ENCODE measurements at regions of chr15 and their contacts with region 1.

Region 1: DNA sequence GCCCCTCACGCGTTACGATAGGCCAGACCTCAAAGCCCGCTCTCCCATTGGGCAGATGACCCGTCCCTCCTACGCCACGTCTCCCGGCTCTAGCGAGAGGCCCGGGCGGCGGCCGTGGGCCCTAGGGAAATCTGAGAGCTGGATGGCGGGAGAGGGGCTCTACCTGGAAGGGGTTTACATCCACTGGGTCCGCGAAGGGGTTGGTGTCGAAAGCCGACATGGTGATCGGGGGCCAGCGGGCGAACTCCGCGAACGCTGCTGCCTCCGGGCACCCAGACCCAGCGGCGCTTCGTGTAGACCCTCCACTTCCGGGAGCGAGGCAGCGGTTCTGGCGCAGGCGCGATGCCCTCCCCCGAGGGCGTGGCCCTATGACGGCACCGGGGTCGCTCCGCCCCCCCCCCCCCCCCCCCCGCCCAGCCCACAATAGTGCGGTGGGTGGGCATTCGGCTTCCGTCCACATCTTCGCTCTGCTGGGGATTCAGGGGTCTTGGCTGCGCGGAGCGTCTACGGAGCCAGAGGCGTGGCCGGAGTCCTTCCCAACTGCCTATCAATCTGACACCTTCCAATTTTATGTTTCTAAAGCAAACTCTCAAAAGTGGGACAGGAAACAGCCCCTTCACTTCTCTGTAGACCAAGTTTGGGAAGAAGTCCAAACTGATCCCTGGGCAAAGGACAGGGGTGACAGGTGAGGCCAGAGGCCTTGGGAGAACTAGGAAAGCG is at the start of gene SCAMP2:
- DNase-seq: peak; percentile 95
- ATAC-seq: peak; percentile 96
- H3K4me3 Mint-ChIP-seq: peak within 1 kb of the TSS; percentile 99
- H3K27ac Mint-ChIP-seq: peak within 1 kb of the TSS; percentile 94
- H3K4me1 Mint-ChIP-seq: peaks cover 44% of the 10 kb centered on the region
- H3K27me3 Mint-ChIP-seq: peaks cover 6% of the 10 kb centered on the region
- total RNA-seq, gene SCAMP2: 96.9 to 105 TPM

Region 2: DNA sequence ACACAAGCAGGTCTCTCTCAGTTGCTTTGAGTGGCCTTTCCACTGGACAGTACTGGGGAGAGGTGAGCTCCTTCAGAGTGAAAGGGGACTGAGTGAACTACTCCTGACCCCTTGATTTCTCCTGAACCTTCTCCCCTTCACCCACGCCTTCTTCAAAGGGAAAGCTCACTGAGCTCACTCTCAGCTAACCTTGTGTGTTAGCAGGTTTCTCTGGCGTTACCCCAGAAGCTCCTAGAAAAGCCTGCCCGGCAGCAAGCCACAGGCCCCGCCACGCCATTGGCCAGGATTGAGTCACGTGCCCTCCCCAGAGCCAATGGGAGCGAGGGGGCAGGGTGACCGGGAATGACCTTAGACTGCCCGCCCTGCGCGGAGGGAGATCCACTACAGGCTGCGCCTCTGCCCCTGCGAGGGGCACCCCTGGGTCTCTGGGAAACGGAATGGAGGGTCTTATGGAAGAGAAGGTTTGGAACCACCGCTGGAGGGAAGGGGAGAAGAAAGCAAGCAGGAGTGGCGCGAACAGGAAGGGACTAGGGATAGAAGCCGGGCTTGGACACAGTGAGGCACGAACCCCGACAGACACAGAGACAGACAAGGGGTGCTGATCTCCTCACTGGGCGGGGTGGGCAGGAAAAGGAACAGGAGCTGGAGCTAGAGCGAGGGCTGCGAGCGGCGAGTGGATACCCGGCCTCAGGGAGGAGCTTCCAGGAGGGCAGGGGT is 274.9 kb before region 1 on chr15:
- CTCF ChIA-PET with region 1: no interaction called
- POLR2A ChIA-PET with region 1: no interaction called
- DNase-seq: peak; percentile 92
- ATAC-seq: peak; percentile 99
- H3K4me3 Mint-ChIP-seq: peak overlapping the region; percentile 96
- H3K27ac Mint-ChIP-seq: peak overlapping the region; percentile 97
- H3K4me1 Mint-ChIP-seq: peaks cover 23% of the 10 kb centered on the region
- H3K27me3 Mint-ChIP-seq: no peaks in the 10 kb centered on the region

Region 3: GRCh38 chr15:74793135-74794028 is 79.8 kb before region 1 on chr15:
- CTCF ChIA-PET with region 1: interaction called, 11 read pairs
- POLR2A ChIA-PET with region 1: interaction called, 5 read pairs
- DNase-seq: peak; percentile 79
- ATAC-seq: peak; percentile 31
- H3K4me3 Mint-ChIP-seq: peak overlapping the region; percentile 19
- H3K27ac Mint-ChIP-seq: peak overlapping the region; percentile 82
- H3K4me1 Mint-ChIP-seq: peaks cover 89% of the 10 kb centered on the region
- H3K27me3 Mint-ChIP-seq: no peaks in the 10 kb centered on the region

Region 4: GRCh38 chr15:74842581-74843444 is 30.4 kb before region 1 on chr15 and contains the start of gene ULK3:
- CTCF ChIA-PET with region 1: interaction called, 26 read pairs
- POLR2A ChIA-PET with region 1: interaction called, 24 read pairs
- DNase-seq: peak; percentile 94
- ATAC-seq: peak; percentile 87
- H3K4me3 Mint-ChIP-seq: peak within 1 kb of the TSS; percentile 89
- H3K27ac Mint-ChIP-seq: peak within 1 kb of the TSS; percentile 93
- H3K4me1 Mint-ChIP-seq: peaks cover 49% of the 10 kb centered on the region
- H3K27me3 Mint-ChIP-seq: no peaks in the 10 kb centered on the region
- total RNA-seq, gene ULK3: 56.9 to 58.0 TPM

Region 5: DNA sequence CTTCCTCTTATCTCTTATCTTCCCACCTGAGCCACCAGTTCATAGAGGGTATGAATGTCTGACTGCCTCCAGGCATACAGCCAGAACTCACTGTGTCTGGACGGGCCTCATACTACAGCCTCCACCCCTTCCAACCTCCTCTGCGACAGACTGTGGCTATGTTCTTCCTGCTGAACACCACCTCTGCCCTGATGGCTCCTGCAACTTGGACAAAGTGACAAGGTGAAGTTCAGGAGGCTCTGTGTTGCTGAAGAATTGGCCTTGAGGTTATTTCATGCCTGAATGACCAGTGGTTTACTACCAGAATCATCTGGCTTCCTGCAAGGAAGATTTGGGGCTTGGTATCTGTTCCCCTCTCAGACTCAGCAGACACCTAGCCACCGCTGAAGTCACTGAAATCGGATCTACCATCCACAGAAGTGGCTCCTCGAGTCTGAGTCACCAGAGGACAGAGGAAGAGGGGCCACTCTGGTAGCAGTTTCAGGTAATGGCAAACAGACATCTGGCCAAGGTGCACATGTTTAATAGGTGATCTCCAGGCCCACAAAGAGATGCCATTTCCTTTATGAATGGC is 16.0 kb before region 1 on chr15:
- CTCF ChIA-PET with region 1: interaction called, 24 read pairs
- POLR2A ChIA-PET with region 1: interaction called, 33 read pairs
- DNase-seq: no peak
- ATAC-seq: peak; percentile 38
- H3K4me3 Mint-ChIP-seq: no peak overlapping the region
- H3K27ac Mint-ChIP-seq: peak overlapping the region; percentile 87
- H3K4me1 Mint-ChIP-seq: peaks cover 41% of the 10 kb centered on the region
- H3K27me3 Mint-ChIP-seq: no peaks in the 10 kb centered on the region

Region 6: DNA sequence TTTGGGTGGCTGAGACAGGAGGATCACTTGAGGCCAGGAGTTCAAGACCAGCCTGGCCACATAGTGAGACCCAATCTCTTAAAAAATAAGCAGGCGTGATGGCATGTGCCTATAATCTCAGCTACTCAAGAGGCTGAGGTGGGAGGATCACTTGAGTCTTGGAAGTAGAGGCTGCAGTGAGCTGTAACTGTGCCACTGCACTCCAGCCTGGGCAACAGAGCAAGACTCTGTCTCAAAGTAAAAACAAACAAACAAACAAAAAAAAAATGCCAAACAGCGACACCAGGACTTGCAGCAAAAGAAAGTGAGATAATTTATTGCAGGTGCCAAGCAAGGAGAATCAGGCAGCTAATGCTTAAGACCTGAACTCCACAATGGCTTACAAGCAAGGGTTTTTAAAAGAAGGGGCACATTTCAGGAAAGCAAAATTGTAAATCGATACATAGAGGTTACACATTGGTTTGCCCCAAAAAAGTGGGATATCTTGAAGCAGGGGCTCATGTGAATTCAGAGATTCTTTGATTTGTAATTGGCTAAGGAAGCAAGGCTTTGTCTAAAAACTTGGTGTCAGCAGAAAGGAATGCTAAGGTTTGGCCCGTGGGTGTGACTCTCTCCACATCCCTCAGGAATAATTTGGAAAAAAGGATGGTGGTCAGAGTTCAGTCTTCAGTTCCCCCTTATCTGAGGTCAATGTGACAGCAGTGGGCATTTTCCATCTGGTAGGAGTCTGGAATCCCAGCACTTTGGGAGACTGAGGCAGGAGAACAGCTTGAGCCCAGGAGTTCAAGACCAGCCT is 11.4 kb after region 1 on chr15:
- CTCF ChIA-PET with region 1: interaction called, 11 read pairs
- POLR2A ChIA-PET with region 1: interaction called, 11 read pairs
- DNase-seq: no peak
- ATAC-seq: no peak
- H3K4me3 Mint-ChIP-seq: no peak overlapping the region
- H3K27ac Mint-ChIP-seq: peak overlapping the region; percentile 30
- H3K4me1 Mint-ChIP-seq: peaks cover 27% of the 10 kb centered on the region
- H3K27me3 Mint-ChIP-seq: peaks cover 4% of the 10 kb centered on the region

Region 7: GRCh38 chr15:74889883-74890664 is 16.9 kb after region 1 on chr15 and contains the start of gene MPI:
- CTCF ChIA-PET with region 1: interaction called, 5 read pairs
- POLR2A ChIA-PET with region 1: interaction called, 11 read pairs
- DNase-seq: peak; percentile 90
- ATAC-seq: peak; percentile 97
- H3K4me3 Mint-ChIP-seq: peak within 1 kb of the TSS; percentile 91
- H3K27ac Mint-ChIP-seq: peak within 1 kb of the TSS; percentile 89
- H3K4me1 Mint-ChIP-seq: peaks cover 50% of the 10 kb centered on the region
- H3K27me3 Mint-ChIP-seq: no peaks in the 10 kb centered on the region
- total RNA-seq, gene MPI: 55.7 to 56.7 TPM

Region 8: DNA sequence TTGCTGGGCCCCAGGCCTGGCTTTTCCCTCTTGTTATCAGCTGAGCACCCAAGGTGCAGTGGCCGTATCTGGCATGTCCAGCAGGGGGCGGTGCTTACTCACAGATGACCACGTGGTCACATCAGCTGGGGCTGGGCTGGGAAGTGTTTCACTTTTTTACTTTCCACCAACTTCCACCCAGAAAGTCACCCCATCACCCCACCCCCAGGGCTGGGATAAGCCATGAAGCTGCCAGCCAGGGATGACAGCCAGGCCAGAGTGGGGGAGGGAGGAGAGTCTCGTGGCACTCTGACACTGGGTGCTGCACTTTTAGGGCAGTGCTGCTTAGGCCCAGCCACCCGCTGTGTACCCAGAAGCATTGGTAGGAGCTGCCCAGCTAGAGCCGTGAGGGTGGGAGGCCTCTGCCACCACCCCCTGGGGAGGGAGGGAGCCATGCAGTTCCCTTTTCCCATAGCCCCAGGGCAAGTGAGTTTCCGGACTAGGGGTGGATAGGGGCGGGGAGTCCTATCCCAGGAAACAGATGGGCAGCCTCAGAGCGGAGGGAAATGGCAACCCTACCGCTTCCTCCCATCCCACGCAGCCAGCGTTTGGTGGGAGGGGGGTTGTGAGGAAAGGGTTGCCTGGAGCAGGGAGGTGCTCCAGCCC is 156.3 kb after region 1 on chr15:
- CTCF ChIA-PET with region 1: no interaction called
- POLR2A ChIA-PET with region 1: no interaction called
- DNase-seq: peak; percentile 91
- ATAC-seq: peak; percentile 85
- H3K4me3 Mint-ChIP-seq: no peak overlapping the region
- H3K27ac Mint-ChIP-seq: peak overlapping the region; percentile 75
- H3K4me1 Mint-ChIP-seq: peaks cover 48% of the 10 kb centered on the region
- H3K27me3 Mint-ChIP-seq: no peaks in the 10 kb centered on the region